AG04449 (cell line): ENCODE measurements at regions of chr5 and their contacts with region 1.

Region 1: GRCh38 chr5:96595300-96596090 is 66.7 kb upstream of the CAST start:
- DNase-seq: no peak
- H3K4me3 ChIP-seq: no peak overlapping the region
- CTCF ChIP-seq: peak; percentile 5

Region 2: GRCh38 chr5:96548947-96549346 is 46.5 kb before region 1 on chr5:
- CTCF ChIA-PET with region 1: no interaction called
- POLR2A ChIA-PET with region 1: no interaction called
- DNase-seq: no peak
- H3K4me3 ChIP-seq: no peak overlapping the region
- CTCF ChIP-seq: no peak

Region 3: GRCh38 chr5:96582343-96582742 is 13.2 kb before region 1 on chr5:
- CTCF ChIA-PET with region 1: interaction called, 48 read pairs
- POLR2A ChIA-PET with region 1: no interaction called
- DNase-seq: no peak
- H3K4me3 ChIP-seq: no peak overlapping the region
- CTCF ChIP-seq: no peak